Tibial artery (tissue), 4 donors: ENCODE measurements at regions of chr16 and their contacts with region 1.

Region 1: GRCh38 chr16:21083729-21084268 is 66.8 kb downstream of the DNAH3 start:
- DNase-seq: peak; percentile 60 to 72
- H3K4me3 ChIP-seq: no peak overlapping the region
- H3K27ac ChIP-seq: no peak overlapping the region
- H3K4me1 ChIP-seq: no peaks in the 10 kb centered on the region
- H3K27me3 ChIP-seq: no peaks in the 10 kb centered on the region
- CTCF ChIP-seq: peak; percentile 79

Region 2: GRCh38 chr16:20803192-20803560 is 280.6 kb before region 1 on chr16:
- intact Hi-C with region 1: loop called (anchors 5 kb)
- DNase-seq: no peak
- H3K4me3 ChIP-seq: no peak overlapping the region
- H3K27ac ChIP-seq: no peak overlapping the region
- H3K4me1 ChIP-seq: peaks cover 0 to 19% (median 8%) of the 10 kb centered on the region in 4 donors
- H3K27me3 ChIP-seq: no peaks in the 10 kb centered on the region
- CTCF ChIP-seq: no peak

Region 3: DNA sequence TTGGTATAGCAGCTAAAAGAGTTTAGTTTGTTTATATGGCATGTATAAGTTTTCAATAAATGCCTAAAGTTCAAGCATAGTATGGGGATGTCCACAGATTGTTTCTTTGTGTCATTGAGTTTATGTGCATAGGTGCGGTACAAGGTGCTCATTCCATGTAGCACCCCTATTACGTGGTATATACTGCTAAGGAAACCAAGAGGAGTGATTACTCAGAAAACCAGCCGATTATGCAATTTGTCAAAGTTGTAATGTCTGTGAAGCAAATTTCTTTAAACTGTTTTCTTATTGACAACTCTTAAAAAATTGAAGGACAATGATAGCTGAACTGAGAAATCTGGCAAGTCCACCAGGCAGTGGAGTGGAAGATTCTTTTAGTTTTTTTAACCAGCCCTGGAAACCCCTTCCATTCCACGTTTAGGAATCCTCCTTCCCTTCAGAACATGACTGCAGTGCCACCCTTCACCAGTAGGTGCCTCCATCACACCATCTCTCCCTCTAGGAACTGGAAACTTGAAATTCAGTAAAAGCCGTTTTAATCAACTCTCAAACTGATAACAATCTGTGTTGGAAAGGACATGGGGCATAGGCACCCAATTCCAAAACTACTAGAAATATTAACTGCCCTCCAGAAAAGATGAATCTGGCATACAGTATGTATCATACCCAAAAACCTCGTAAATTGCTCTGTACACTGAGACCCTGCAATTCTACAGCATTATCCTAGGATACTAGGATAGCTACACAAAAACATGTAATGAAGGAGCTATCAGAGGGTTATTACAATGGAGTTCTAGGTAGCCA is 234.0 kb before region 1 on chr16:
- intact Hi-C with region 1: loop called (anchors 2 kb)
- DNase-seq: peak; percentile 82
- H3K4me3 ChIP-seq: no peak overlapping the region
- H3K27ac ChIP-seq: peak overlapping the region; percentile 75 to 76
- H3K4me1 ChIP-seq: peaks cover 3 to 50% (median 42%) of the 10 kb centered on the region in 4 donors
- H3K27me3 ChIP-seq: no peaks in the 10 kb centered on the region
- CTCF ChIP-seq: peak; percentile 96 to 97

Region 4: GRCh38 chr16:20889625-20890275 is 194.0 kb before region 1 on chr16:
- intact Hi-C with region 1: no loop called
- DNase-seq: no peak
- H3K4me3 ChIP-seq: no peak overlapping the region
- H3K27ac ChIP-seq: no peak overlapping the region
- H3K4me1 ChIP-seq: peaks cover 0 to 85% (median 21%) of the 10 kb centered on the region in 4 donors
- H3K27me3 ChIP-seq: no peaks in the 10 kb centered on the region
- CTCF ChIP-seq: no peak